K562 (cell line): ENCODE measurements at regions of chr12 and their contacts with region 1.

Region 1: GRCh38 chr12:47156167-47156736 is 76.5 kb upstream of the AMIGO2 start:
- DNase-seq: peak in 2 of 4 experiments; percentile 36 to 65
- ATAC-seq: peak; percentile 82
- H3K4me3 ChIP-seq: no peak overlapping the region
- H3K27ac ChIP-seq: peak overlapping the region; percentile 59; the same call in 2 of the 3 replicates
- H3K4me1 ChIP-seq: peaks cover 3 to 14% of the 10 kb centered on the region in 2 experiments; a peak in 4 of 5 replicates
- H3K27me3 ChIP-seq: no peaks in the 10 kb centered on the region
- CTCF ChIP-seq: no peak
- EP300 ChIP-seq: peak; percentile 5; the same call in 1 of the 2 replicates
- POLR2A ChIP-seq: no peak
- RAD21 ChIP-seq: no peak

Region 2: GRCh38 chr12:47145188-47145587 is 11.1 kb before region 1 on chr12:
- CTCF ChIA-PET with region 1: no interaction called
- POLR2A ChIA-PET with region 1: interaction called, 11 read pairs
- in situ Hi-C with region 1: no loop called
- intact Hi-C with region 1: no loop called
- DNase-seq: no peak
- ATAC-seq: no peak
- H3K4me3 ChIP-seq: no peak overlapping the region
- H3K27ac ChIP-seq: no peak overlapping the region
- H3K4me1 ChIP-seq: no peaks in the 10 kb centered on the region; a peak in 1 of 5 replicates
- H3K27me3 ChIP-seq: no peaks in the 10 kb centered on the region
- CTCF ChIP-seq: no peak
- EP300 ChIP-seq: no peak
- POLR2A ChIP-seq: no peak
- RAD21 ChIP-seq: no peak

Region 3: DNA sequence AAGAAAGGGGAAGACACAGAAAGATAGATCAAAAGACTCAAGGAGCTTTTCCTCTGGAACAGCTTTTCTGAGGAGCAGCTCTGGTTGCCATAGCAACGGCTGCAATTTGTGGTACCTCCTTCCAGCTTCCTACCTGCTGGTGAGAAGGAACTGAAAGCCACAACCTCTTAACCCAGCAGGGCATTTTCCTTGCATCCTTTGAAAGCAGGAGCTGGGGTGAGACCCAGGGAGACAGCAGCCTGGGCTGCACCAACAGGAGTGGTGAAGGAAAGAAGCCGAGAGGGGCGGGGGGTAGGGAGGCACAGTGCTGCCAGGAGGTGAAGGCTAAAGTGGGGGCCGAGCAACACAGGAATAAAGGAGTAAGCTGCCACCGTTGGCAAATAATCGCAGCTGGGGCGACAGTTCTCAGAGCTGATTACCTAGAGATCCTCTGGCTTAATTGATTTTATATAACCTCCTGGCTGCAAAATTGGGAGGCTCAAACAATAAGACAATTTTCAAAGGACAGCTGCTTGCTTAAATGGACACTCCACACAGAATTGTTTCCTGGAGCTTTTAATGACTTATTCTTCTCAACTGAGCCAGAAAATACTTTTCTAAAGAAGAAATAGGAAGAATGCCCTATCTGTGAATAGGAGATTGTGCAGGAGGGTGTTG is 420.2 kb after region 1 on chr12:
- CTCF ChIA-PET with region 1: no interaction called
- POLR2A ChIA-PET with region 1: no interaction called
- in situ Hi-C with region 1: no loop called
- intact Hi-C with region 1: no loop called
- DNase-seq: peak in 1 of 4 experiments; percentile 12
- ATAC-seq: no peak
- H3K4me3 ChIP-seq: no peak overlapping the region
- H3K27ac ChIP-seq: no peak overlapping the region
- H3K4me1 ChIP-seq: no peaks in the 10 kb centered on the region
- H3K27me3 ChIP-seq: peaks cover 0 to 4% of the 10 kb centered on the region in 2 experiments; a peak in 1 of 5 replicates
- CTCF ChIP-seq: no peak
- EP300 ChIP-seq: no peak
- POLR2A ChIP-seq: no peak
- RAD21 ChIP-seq: no peak